Uterus (tissue), 4 donors: ENCODE measurements at regions of chr6 and their contacts with region 1.

Region 1: DNA sequence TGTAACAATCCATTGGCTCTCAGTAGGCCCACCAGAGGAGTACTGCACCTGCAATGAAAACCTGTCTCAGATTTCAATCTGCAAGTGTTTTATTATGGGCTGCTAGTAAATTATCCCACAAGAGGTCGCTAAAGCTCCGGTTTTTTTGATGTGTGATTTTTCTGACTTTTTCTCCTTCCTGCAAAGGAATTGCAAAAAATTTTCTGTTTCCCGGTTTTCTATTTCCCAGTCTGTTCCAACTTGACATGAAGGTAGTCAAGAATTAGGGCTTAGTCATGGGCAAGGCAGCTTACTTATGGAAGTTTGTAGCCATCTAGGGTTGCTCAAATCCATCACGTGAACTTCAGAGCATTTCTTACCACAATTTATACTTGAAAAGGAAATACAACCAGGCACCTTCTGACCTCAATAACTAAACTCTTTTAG is 38.5 kb upstream of the AHI1 start:
- DNase-seq: no peak
- H3K4me3 ChIP-seq: no peak overlapping the region
- H3K27ac ChIP-seq: peak overlapping the region in 1 of 2 donors; percentile 22
- H3K4me1 ChIP-seq: no peaks in the 10 kb centered on the region
- H3K27me3 ChIP-seq: no peaks in the 10 kb centered on the region
- CTCF ChIP-seq: peak; percentile 61 to 74 (median 63)
- POLR2A ChIP-seq: no peak

Region 2: GRCh38 chr6:135329851-135330803 is 205.9 kb before region 1 on chr6:
- intact Hi-C with region 1: no loop called
- DNase-seq: no peak
- H3K4me3 ChIP-seq: no peak overlapping the region
- H3K27ac ChIP-seq: no peak overlapping the region
- H3K4me1 ChIP-seq: no peaks in the 10 kb centered on the region
- H3K27me3 ChIP-seq: no peaks in the 10 kb centered on the region
- CTCF ChIP-seq: no peak
- POLR2A ChIP-seq: no peak

Region 3: GRCh38 chr6:135592276-135592675 is 56.3 kb after region 1 on chr6:
- intact Hi-C with region 1: no loop called
- DNase-seq: no peak
- H3K4me3 ChIP-seq: no peak overlapping the region
- H3K27ac ChIP-seq: no peak overlapping the region
- H3K4me1 ChIP-seq: no peaks in the 10 kb centered on the region
- H3K27me3 ChIP-seq: no peaks in the 10 kb centered on the region
- CTCF ChIP-seq: no peak
- POLR2A ChIP-seq: no peak

Region 4: DNA sequence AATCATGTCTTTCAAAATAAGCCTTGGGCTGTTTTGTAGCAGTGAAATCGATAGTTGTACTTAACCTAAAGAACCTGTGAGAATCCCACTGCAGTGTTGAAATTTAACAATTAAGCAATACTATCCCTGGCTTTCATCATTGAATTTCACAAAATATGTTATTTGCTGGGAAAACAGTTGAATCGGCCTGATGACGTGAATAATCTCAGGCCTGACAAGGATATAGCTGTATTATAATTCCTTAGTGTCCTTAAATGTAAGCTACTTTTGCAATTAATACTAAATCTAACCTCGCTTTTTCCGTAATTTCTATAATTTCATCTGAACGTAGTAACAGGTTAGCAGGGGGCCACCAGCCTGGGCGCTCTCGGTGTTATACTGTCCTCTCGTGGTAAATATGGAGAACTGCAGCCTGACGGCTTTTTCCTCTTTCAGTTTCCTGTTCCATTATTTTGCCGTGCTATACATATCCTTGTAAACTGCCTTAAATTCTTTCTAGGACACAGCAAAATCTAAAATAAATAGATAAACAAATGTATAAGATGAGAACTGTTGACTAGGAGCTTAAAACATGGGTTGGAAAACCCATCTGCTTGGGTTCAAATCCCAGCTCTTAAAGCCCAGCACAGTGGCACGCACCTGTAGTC is 690.1 kb after region 1 on chr6:
- intact Hi-C with region 1: loop called (anchors 10 kb)
- DNase-seq: peak; percentile 60 to 64
- H3K4me3 ChIP-seq: peak overlapping the region in 1 of 2 donors; percentile 33
- H3K27ac ChIP-seq: peak overlapping the region in 1 of 2 donors; percentile 57
- H3K4me1 ChIP-seq: no peaks in the 10 kb centered on the region
- H3K27me3 ChIP-seq: no peaks in the 10 kb centered on the region
- CTCF ChIP-seq: peak; percentile 95 to 100 (median 100)
- POLR2A ChIP-seq: no peak